ENCODE measurements at regions of chr17 and their contacts with region 1.

Region 1: GRCh38 chr17:56499799-56500388 is 93.6 kb upstream of the NOG start:
- DNase-seq: no peak
- ATAC-seq: peak in 2 of 4 donors; percentile 62 to 65
- H3K4me3 ChIP-seq: no peak overlapping the region
- H3K27ac ChIP-seq: no peak overlapping the region
- H3K4me1 ChIP-seq: peaks cover 11% of the 10 kb centered on the region
- H3K27me3 ChIP-seq: no peaks in the 10 kb centered on the region
- CTCF ChIP-seq: peak; percentile 53

Region 2: GRCh38 chr17:56592487-56593085 is 92.7 kb after region 1 on chr17:
- intact Hi-C with region 1: loop called (anchors 5 kb)
- DNase-seq: peak; percentile 68 to 79
- ATAC-seq: peak; percentile 76 to 82 (median 80)
- H3K4me3 ChIP-seq: peak overlapping the region; percentile 81
- H3K27ac ChIP-seq: no peak overlapping the region
- H3K4me1 ChIP-seq: peaks cover 22% of the 10 kb centered on the region
- H3K27me3 ChIP-seq: peaks cover 0 to 1% (median 0%) of the 10 kb centered on the region in 3 donors
- CTCF ChIP-seq: peak; percentile 100

Region 3: GRCh38 chr17:56653877-56654276 is 154.0 kb after region 1 on chr17:
- intact Hi-C with region 1: loop called in 1 of 2 experiments (anchors 2 kb)
- DNase-seq: no peak
- ATAC-seq: peak in 3 of 4 donors; percentile 37 to 68 (median 67)
- H3K4me3 ChIP-seq: no peak overlapping the region
- H3K27ac ChIP-seq: no peak overlapping the region
- H3K4me1 ChIP-seq: no peaks in the 10 kb centered on the region
- H3K27me3 ChIP-seq: no peaks in the 10 kb centered on the region
- CTCF ChIP-seq: peak; percentile 35

Region 4: DNA sequence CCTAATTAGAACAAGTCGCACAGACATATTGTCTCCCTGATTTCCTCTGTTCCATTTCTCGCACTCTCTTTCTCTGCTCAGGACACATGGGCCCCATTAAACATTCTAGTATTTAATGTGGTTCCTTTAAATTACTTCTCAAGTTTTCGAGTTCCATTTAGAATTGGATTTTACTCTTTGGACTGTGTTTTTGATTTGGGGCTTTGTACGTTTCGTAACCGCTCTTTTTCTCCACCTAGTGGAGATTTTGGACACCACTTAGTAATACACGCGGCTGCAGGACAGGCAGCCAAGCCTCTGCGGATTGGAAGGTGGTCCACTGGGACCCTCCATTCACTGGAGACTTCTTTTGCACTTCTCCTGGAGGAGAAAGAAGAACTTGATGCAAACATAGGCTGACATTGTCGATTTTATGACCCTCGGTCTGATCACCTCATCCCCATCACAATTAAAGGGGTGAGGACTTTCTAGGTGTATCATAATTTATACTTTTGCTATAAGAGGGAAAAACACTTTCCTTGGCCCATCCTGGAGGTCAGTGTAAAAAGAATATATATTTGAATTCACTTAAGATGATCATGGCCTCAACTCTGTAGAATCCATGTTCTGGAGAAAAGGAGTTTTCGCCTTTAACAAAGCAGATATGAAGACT is 179.3 kb after region 1 on chr17:
- intact Hi-C with region 1: loop called in 1 of 2 experiments (anchors 10 kb)
- DNase-seq: peak in 1 of 2 donors; percentile 32
- ATAC-seq: peak in 3 of 4 donors; percentile 47 to 81 (median 60)
- H3K4me3 ChIP-seq: peak overlapping the region; percentile 61
- H3K27ac ChIP-seq: no peak overlapping the region
- H3K4me1 ChIP-seq: no peaks in the 10 kb centered on the region
- H3K27me3 ChIP-seq: peaks cover 0 to 15% (median 2%) of the 10 kb centered on the region in 3 donors
- CTCF ChIP-seq: peak; percentile 57

Region 5: GRCh38 chr17:56715613-56716357 is 215.9 kb after region 1 on chr17:
- intact Hi-C with region 1: loop called (anchors 2 to 5 kb)
- DNase-seq: peak; percentile 77 to 82
- ATAC-seq: peak; percentile 87 to 99 (median 90)
- H3K4me3 ChIP-seq: no peak overlapping the region
- H3K27ac ChIP-seq: no peak overlapping the region
- H3K4me1 ChIP-seq: peaks cover 4% of the 10 kb centered on the region
- H3K27me3 ChIP-seq: no peaks in the 10 kb centered on the region
- CTCF ChIP-seq: peak; percentile 85

Region 6: GRCh38 chr17:56779898-56780733 is 280.2 kb after region 1 on chr17:
- intact Hi-C with region 1: loop called in 1 of 2 experiments (anchors 5 kb)
- DNase-seq: peak; percentile 75 to 86
- ATAC-seq: peak; percentile 82 to 92 (median 86)
- H3K4me3 ChIP-seq: peak overlapping the region; percentile 53
- H3K27ac ChIP-seq: no peak overlapping the region
- H3K4me1 ChIP-seq: peaks cover 25% of the 10 kb centered on the region
- H3K27me3 ChIP-seq: no peaks in the 10 kb centered on the region
- CTCF ChIP-seq: peak; percentile 99